Mammary epithelial cell (primary cell): ENCODE measurements at regions of chr3 and their contacts with region 1.

Region 1: DNA sequence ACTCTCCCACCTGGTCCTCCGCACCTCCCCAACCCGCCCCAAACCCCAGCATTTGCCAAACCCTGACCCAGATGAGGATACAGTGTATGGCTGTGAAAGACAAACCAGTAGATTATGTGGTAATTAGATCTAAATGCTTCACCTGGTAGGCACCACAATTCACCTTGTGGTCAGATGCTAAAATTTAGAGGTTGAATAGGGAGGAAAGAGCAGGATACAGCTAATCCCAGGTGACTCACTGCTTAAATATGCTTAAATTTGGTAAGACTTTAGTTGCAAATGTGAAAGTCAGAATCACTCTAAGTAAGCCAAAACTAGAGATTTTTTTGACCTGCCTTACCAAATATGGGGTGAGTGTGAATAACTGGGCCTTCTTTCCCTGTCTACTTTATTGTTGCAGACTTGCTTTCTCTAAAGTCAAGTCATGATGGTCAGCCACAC is 105.5 kb downstream of the MME start:
- DNase-seq: peak; percentile 27
- H3K4me3 ChIP-seq: no peak overlapping the region
- H3K27ac ChIP-seq: no peak overlapping the region
- H3K4me1 ChIP-seq: peaks cover 5% of the 10 kb centered on the region
- H3K27me3 ChIP-seq: no peaks in the 10 kb centered on the region
- CTCF ChIP-seq: no peak

Region 2: GRCh38 chr3:154829929-154830328 is 355.7 kb before region 1 on chr3:
- CTCF ChIA-PET with region 1: no interaction called
- dilution Hi-C with region 1: loop called (anchors 5 kb)
- in situ Hi-C with region 1: no loop called
- intact Hi-C with region 1: no loop called
- DNase-seq: no peak
- H3K4me3 ChIP-seq: no peak overlapping the region
- H3K27ac ChIP-seq: no peak overlapping the region
- H3K4me1 ChIP-seq: no peaks in the 10 kb centered on the region
- H3K27me3 ChIP-seq: no peaks in the 10 kb centered on the region
- CTCF ChIP-seq: no peak

Region 3: GRCh38 chr3:154954753-154955152 is 230.9 kb before region 1 on chr3:
- CTCF ChIA-PET with region 1: no interaction called
- dilution Hi-C with region 1: no loop called
- in situ Hi-C with region 1: no loop called
- intact Hi-C with region 1: loop called (anchors 10 kb)
- DNase-seq: peak; percentile 40
- H3K4me3 ChIP-seq: no peak overlapping the region
- H3K27ac ChIP-seq: no peak overlapping the region
- H3K4me1 ChIP-seq: no peaks in the 10 kb centered on the region
- H3K27me3 ChIP-seq: no peaks in the 10 kb centered on the region
- CTCF ChIP-seq: peak; percentile 59 to 78

Region 4: DNA sequence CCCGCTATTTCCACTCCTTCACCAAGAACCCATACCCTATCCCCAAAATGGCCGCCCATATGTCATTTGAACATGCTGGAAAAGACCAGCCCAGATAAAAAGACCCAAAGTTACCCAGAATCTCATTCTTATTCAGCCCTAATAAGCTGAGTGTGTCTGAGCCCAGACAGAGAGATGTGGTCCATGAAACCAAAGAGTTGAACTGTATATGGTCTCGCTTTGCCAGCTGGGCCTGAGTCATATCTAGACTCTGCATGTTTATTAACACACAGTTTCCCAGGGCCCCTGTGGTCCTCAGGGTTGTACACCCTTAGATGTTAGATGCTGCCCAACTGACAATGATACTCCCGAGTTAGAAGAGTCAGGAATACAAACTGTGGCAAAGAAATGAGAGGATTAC is 309.7 kb after region 1 on chr3:
- CTCF ChIA-PET with region 1: no interaction called
- dilution Hi-C with region 1: no loop called
- in situ Hi-C with region 1: no loop called
- intact Hi-C with region 1: no loop called
- DNase-seq: no peak
- H3K4me3 ChIP-seq: no peak overlapping the region
- H3K27ac ChIP-seq: no peak overlapping the region
- H3K4me1 ChIP-seq: peaks cover 9% of the 10 kb centered on the region
- H3K27me3 ChIP-seq: no peaks in the 10 kb centered on the region
- CTCF ChIP-seq: no peak